Left ventricle myocardium superior (tissue), 1 donor: ENCODE measurements at regions of chr9 and their contacts with region 1.

Region 1: GRCh38 chr9:70484210-70485130 is 70.0 kb upstream of the KLF9 start:
- DNase-seq: no peak
- ATAC-seq: peak; percentile 69

Region 2: DNA sequence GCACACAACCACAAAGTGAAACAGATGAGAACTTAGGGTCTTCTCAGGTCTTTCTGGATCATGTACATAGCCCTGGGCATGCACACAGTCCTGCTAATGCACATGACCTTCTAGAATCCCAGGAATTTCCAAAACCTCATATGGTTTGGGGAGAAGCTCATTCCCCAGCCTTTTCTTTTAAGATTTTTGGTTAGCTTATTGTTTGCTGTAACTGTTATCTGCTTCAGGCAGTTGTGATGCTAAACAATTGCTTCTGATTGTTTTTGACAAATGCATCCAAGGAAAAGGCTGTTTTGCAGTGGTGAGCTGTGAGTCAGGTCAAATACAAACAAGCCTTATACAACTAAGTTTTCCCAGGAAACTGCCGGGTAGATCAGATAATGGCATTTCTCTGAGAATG is 193.1 kb before region 1 on chr9:
- intact Hi-C with region 1: no loop called
- DNase-seq: no peak
- ATAC-seq: no peak

Region 3: DNA sequence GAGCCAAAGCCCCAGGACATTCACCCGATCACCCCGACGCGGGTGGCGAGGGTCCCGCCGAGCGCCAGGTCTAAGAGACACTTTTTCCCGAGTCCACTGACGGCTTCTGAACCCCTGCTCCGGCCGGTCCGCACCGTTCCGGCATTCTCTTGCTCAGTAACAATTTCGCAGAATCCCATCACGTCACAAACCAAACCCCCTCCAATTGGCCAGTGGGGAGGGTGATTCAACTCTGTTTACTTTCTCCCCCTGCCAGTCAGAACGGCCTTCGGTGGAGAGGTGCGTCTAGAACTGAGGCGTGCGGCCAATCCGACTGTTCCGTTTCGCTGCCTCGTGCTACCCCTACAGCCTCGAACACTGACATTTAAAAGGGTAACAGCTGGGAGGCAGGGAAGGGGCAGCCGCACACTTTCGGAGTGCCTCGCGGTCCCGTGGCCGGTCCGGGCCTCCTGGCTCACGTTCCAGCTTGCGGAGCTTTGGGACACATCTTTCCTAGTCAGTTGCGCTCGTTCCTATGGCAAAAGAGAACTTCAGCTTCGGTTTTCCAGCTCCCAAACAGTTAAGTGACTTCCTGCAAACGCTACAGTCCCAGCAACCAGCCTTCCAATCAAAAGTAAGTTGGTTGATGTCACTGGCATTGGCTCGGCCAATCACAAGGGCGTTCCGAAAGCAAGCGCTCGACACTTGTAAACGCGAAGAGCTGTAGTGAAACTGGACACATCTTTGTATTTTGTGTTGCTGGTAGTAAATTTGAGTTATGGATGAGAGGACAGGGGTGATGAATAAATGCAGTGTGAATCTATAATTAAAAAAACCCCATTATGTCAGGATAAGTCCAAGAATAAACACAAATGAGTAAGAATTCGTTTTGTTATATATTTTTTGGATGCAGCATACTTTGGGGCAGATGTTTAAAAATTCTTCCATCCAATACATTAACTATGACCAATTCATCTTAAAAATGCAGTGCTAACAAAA is 70.4 kb before region 1 on chr9 and contains the start of gene KLF9:
- intact Hi-C with region 1: loop called (anchors 5 kb)
- DNase-seq: peak; percentile 93
- ATAC-seq: peak; percentile 72
- total RNA-seq, gene KLF9: 54.9 TPM

Region 4: DNA sequence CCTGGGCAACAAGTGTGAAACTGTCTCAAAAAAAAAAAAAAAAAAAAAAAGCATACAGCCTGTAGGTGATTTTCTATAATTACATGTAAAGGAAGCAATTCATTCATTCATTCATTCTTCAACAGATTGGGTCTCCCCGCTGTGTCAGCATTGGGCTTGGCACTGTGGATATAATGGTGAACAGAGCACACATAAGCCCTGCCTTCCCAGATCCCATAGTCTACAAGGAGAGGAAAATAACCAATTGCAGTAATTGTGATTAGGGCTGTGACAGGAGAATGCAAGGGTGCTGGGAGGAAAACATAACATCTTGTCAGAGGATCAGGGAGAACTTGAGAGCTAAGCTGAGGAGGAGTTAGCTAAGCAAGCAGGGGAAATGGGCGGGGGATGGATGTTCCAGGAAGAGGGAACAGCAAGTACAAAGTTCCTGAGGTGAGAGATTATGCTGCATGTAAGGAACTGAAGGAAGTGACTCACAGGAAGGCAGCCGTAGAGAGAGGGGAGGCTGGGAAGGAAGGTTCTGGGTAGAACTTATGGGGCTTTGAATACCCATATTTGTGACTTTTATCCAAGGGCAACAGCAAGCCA is 46.0 kb before region 1 on chr9:
- intact Hi-C with region 1: no loop called
- DNase-seq: peak; percentile 43
- ATAC-seq: peak; percentile 91

Region 5: DNA sequence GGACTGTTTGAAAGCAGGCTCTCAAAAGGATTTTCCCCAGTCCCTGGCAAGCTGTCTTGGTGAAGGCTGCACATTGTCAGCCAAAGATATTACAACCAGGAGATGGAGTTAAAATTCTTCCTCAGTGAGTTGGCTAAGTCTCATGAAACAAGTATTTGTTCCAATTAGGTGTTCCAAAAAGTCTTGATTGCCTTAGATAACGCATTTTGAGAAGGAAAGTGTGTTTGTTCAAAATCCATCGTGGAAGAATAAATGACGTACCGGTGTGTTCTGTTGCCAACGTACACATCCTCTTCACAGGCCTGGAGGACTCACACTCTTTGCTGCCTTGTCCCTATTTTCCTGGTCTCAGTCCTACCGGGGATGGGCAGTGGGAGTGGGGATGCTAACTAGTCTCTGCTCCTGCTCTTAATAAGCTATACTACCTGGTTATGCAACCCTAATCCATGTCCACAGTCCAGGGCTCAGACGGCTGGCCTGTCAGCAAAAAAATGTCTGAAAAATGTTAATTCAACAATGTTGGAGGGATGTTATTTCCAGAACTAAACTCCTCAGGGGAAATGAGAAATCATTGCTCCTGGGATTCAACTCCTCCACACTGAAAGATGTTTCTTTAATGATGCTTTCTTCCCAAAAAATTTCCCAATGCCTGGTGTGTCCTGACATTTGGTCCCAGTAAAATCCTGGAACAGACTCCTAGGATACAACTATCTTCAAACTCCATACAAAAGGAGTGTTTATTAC is 105.3 kb after region 1 on chr9:
- intact Hi-C with region 1: loop called (anchors 5 kb)
- DNase-seq: peak; percentile 47
- ATAC-seq: peak; percentile 77